Psoas muscle (tissue), 8 donors: ENCODE measurements at regions of chr11 and their contacts with region 1.

Region 1: GRCh38 chr11:128831174-128832120 is 35.6 kb downstream of the KCNJ1 start:
- DNase-seq: peak; percentile 78 to 87
- ATAC-seq: peak; percentile 76 to 92 (median 82)
- H3K4me3 ChIP-seq: no peak overlapping the region
- H3K27ac ChIP-seq: no peak overlapping the region
- H3K4me1 ChIP-seq: no peaks in the 10 kb centered on the region
- H3K27me3 ChIP-seq: no peaks in the 10 kb centered on the region
- CTCF ChIP-seq: peak; percentile 88

Region 2: GRCh38 chr11:128172046-128172878 is 659.2 kb before region 1 on chr11:
- intact Hi-C with region 1: loop called (anchors 2 to 5 kb)
- DNase-seq: peak; percentile 74 to 84
- ATAC-seq: peak in 3 of 4 donors; percentile 57 to 86 (median 65)
- H3K4me3 ChIP-seq: no peak overlapping the region
- H3K27ac ChIP-seq: no peak overlapping the region
- H3K4me1 ChIP-seq: no peaks in the 10 kb centered on the region
- H3K27me3 ChIP-seq: peaks cover 0 to 5% (median 4%) of the 10 kb centered on the region in 3 donors
- CTCF ChIP-seq: peak; percentile 76

Region 3: GRCh38 chr11:128790196-128790595 is 41.3 kb before region 1 on chr11:
- intact Hi-C with region 1: no loop called
- DNase-seq: no peak
- ATAC-seq: no peak
- H3K4me3 ChIP-seq: no peak overlapping the region
- H3K27ac ChIP-seq: no peak overlapping the region
- H3K4me1 ChIP-seq: no peaks in the 10 kb centered on the region
- H3K27me3 ChIP-seq: peaks cover 0 to 2% (median 0%) of the 10 kb centered on the region in 3 donors
- CTCF ChIP-seq: no peak